CD4-positive, alpha-beta memory T cell (primary cell): ENCODE measurements at regions of chr10 and their contacts with region 1.

Region 1: GRCh38 chr10:73810735-73811465 is 498 bp downstream of the NDST2 start:
- DNase-seq: peak; percentile 64 to 71 (median 69)
- H3K4me3 ChIP-seq: peak overlapping the region; percentile 77 to 81
- H3K4me3 Mint-ChIP-seq: peak overlapping the region; percentile 89 to 95 (median 91)
- H3K27ac ChIP-seq: peak overlapping the region; percentile 88
- H3K27ac Mint-ChIP-seq: peak overlapping the region; percentile 84 to 98 (median 95)
- H3K4me1 ChIP-seq: peaks cover 51% of the 10 kb centered on the region
- H3K4me1 Mint-ChIP-seq: peaks cover 29 to 49% (median 40%) of the 10 kb centered on the region in 4 donors
- H3K27me3 ChIP-seq: no peaks in the 10 kb centered on the region
- H3K27me3 Mint-ChIP-seq: no peaks in the 10 kb centered on the region

Region 2: DNA sequence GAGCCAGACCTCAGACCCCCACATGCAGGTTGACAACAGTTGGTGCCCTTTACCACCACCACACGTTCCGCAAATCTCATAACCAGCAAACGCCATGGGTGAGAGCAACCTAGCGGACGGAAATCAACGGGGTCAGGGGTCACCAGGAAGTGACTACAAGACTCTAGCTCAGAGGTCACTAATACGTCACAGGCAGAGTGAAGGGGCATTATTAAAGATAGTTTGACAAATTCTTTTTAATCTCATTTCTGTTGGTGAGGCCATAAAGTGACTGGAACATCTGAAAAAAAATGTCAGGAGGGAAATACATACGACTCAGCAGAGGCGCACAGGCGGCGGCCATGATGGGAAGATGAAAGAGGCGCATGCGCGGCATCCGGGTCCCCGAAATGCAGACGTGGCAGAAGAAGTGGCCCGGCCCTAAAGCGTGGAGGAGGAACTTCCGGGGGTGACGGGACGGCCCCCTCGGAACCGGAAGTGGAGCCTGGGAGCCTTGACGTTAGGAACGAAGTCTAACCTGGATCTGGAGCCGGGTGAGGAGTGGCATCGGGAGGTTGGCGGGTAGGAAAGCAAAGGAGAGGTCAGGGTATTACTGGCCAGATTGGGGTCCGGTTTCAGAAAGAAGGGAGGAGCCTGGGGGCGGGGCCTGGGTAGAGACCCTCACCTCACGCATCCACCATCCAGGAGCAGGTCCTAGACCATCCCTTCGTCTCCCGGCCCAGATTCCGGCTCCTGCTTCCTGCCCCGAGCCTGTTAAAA is 66.8 kb before region 1 on chr10 and contains the start of gene SEC24C:
- CTCF ChIA-PET with region 1: no interaction called
- POLR2A ChIA-PET with region 1: interaction called, 12 read pairs
- intact Hi-C with region 1: loop called (anchors 1 kb)
- DNase-seq: peak; percentile 95 to 96 (median 96)
- H3K4me3 ChIP-seq: peak within 1 kb of the TSS; percentile 95
- H3K4me3 Mint-ChIP-seq: peak within 1 kb of the TSS; percentile 99 to 100 (median 100)
- H3K27ac ChIP-seq: peak within 1 kb of the TSS; percentile 97
- H3K27ac Mint-ChIP-seq: peak within 1 kb of the TSS; percentile 99 to 100 (median 100)
- H3K4me1 ChIP-seq: peaks cover 38% of the 10 kb centered on the region
- H3K4me1 Mint-ChIP-seq: peaks cover 20 to 47% (median 33%) of the 10 kb centered on the region in 4 donors
- H3K27me3 ChIP-seq: no peaks in the 10 kb centered on the region
- H3K27me3 Mint-ChIP-seq: no peaks in the 10 kb centered on the region
- total RNA-seq, gene SEC24C: 126 to 127 TPM

Region 3: GRCh38 chr10:73785221-73785720 is 25.6 kb before region 1 on chr10 and contains the start of gene ZSWIM8:
- CTCF ChIA-PET with region 1: interaction called, 14 read pairs
- POLR2A ChIA-PET with region 1: interaction called, 47 read pairs
- intact Hi-C with region 1: loop called (anchors 1 kb)
- DNase-seq: peak; percentile 85 to 96 (median 89)
- H3K4me3 ChIP-seq: peak within 1 kb of the TSS; percentile 62 to 64
- H3K4me3 Mint-ChIP-seq: peak within 1 kb of the TSS; percentile 94 to 99 (median 98)
- H3K27ac ChIP-seq: peak within 1 kb of the TSS; percentile 77
- H3K27ac Mint-ChIP-seq: peak within 1 kb of the TSS; percentile 95 to 99 (median 99)
- H3K4me1 ChIP-seq: peaks cover 54% of the 10 kb centered on the region
- H3K4me1 Mint-ChIP-seq: peaks cover 35 to 67% (median 50%) of the 10 kb centered on the region in 4 donors
- H3K27me3 ChIP-seq: no peaks in the 10 kb centered on the region
- H3K27me3 Mint-ChIP-seq: peaks cover 2% of the 10 kb centered on the region in 2 donors
- total RNA-seq, gene ZSWIM8: 93.3 to 100 TPM

Region 4: GRCh38 chr10:73848821-73849489 is 38.1 kb after region 1 on chr10:
- CTCF ChIA-PET with region 1: interaction called, 3 read pairs
- POLR2A ChIA-PET with region 1: no interaction called
- intact Hi-C with region 1: loop called (anchors 5 kb)
- DNase-seq: peak; percentile 87 to 92 (median 89)
- H3K4me3 ChIP-seq: no peak overlapping the region
- H3K4me3 Mint-ChIP-seq: peak overlapping the region in 5 of 8 donors; percentile 26 to 59 (median 27)
- H3K27ac ChIP-seq: peak overlapping the region; percentile 46
- H3K27ac Mint-ChIP-seq: peak overlapping the region; percentile 83 to 96 (median 94)
- H3K4me1 ChIP-seq: peaks cover 8% of the 10 kb centered on the region
- H3K4me1 Mint-ChIP-seq: peaks cover 14 to 28% (median 16%) of the 10 kb centered on the region in 4 donors
- H3K27me3 ChIP-seq: no peaks in the 10 kb centered on the region
- H3K27me3 Mint-ChIP-seq: no peaks in the 10 kb centered on the region

Region 5: DNA sequence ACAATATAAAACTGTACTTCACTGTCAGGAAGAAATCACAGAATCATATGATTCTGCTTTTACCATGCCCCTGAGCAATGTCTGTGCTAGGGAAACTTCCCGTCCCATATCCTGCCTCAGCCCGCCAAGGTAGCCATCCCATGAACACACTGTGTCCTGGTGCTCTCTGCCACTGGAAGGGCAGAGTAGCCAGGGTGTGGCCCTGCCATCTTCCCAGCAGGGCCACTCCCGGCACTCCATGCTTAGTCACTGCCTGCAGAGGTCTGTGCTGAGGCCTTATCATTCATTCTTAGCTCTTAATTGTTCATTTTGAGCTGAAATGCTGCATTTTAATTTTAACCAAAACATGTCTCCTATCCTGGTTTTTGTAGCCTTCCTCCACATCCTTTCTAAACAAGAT is 307.9 kb after region 1 on chr10:
- CTCF ChIA-PET with region 1: no interaction called
- POLR2A ChIA-PET with region 1: no interaction called
- intact Hi-C with region 1: no loop called
- DNase-seq: no peak
- H3K4me3 ChIP-seq: no peak overlapping the region
- H3K4me3 Mint-ChIP-seq: no peak overlapping the region
- H3K27ac ChIP-seq: peak overlapping the region; percentile 2
- H3K27ac Mint-ChIP-seq: peak overlapping the region; percentile 1 to 81 (median 72)
- H3K4me1 ChIP-seq: no peaks in the 10 kb centered on the region
- H3K4me1 Mint-ChIP-seq: peaks cover 0 to 8% (median 1%) of the 10 kb centered on the region in 4 donors
- H3K27me3 ChIP-seq: no peaks in the 10 kb centered on the region
- H3K27me3 Mint-ChIP-seq: no peaks in the 10 kb centered on the region